H1 (cell line): ENCODE measurements at regions of chr12 and their contacts with region 1.

Region 1: GRCh38 chr12:26629864-26630263 is 203.1 kb downstream of the ITPR2 start:
- DNase-seq: no peak
- H3K4me3 ChIP-seq: no peak overlapping the region
- H3K27ac ChIP-seq: no peak overlapping the region
- H3K4me1 ChIP-seq: peaks cover 0 to 5% (median 3%) of the 10 kb centered on the region in 4 experiments; a peak in 5 of 7 replicates
- H3K27me3 ChIP-seq: no peaks in the 10 kb centered on the region
- CTCF ChIP-seq: peak; percentile 33 to 39 (median 35); a peak in 3 of 4 replicates
- EP300 ChIP-seq: no peak
- POLR2A ChIP-seq: no peak
- RAD21 ChIP-seq: peak; percentile 54 to 67

Region 2: DNA sequence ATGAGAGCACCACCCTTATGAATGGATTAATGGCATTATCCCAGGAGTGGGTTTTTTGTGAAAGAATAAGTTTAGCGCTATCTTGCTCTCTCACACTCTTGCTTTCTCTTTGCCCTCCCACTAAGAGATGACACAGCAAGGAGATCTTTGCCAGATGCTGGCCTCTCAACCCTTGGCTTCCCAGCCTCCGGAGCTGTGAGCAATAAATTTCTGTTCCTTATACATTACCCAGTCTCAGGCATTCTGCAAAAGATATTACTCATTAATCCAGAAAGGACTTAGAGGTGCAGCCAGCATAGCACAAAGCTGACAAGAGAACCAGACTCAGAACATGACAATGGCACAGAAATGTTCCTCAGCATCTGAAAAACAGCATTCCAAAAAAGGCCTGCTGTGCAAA is 12.5 kb after region 1 on chr12:
- CTCF ChIA-PET with region 1: interaction called, 15 read pairs
- POLR2A ChIA-PET with region 1: no interaction called
- DNase-seq: no peak
- H3K4me3 ChIP-seq: no peak overlapping the region
- H3K27ac ChIP-seq: no peak overlapping the region
- H3K4me1 ChIP-seq: peaks cover 3 to 9% (median 4%) of the 10 kb centered on the region in 4 experiments
- H3K27me3 ChIP-seq: no peaks in the 10 kb centered on the region
- CTCF ChIP-seq: no peak
- EP300 ChIP-seq: no peak
- POLR2A ChIP-seq: no peak
- RAD21 ChIP-seq: no peak

Region 3: DNA sequence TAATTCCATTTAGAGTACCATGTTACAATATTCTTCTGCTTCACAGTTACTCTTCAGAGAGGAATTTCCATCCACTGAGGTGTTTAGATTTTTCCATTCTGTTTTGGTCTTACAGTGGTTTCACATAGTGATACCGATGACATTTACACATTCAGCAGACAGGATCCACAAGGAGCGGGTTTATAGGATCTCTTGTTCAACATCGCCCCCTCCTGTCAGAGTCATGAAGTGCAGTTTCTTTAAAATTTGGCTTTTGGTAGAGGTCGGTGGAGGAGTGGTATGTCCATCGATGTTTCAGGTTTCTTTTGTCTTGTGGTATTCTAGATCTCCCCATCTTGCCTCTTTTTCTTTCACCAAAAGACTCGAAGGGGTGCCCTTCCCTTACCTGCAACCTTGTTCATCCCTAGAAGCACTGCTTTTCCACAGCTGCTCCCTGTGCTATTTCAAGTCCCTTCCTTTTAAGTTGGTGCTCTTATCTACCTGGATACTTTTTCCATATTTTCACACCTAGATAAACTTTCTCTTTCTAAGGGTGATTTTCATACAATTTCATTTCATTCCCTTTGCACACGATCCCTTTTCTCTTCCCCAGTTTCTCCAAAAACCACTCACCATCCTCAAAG is 21.8 kb after region 1 on chr12:
- CTCF ChIA-PET with region 1: interaction called, 10 read pairs
- POLR2A ChIA-PET with region 1: no interaction called
- DNase-seq: peak; percentile 59 to 93
- H3K4me3 ChIP-seq: no peak overlapping the region
- H3K27ac ChIP-seq: no peak overlapping the region
- H3K4me1 ChIP-seq: peaks cover 0 to 1% (median 0%) of the 10 kb centered on the region in 4 experiments; a peak in 1 of 7 replicates
- H3K27me3 ChIP-seq: no peaks in the 10 kb centered on the region
- CTCF ChIP-seq: peak; percentile 14 to 85 (median 83)
- EP300 ChIP-seq: no peak
- POLR2A ChIP-seq: no peak
- RAD21 ChIP-seq: peak; percentile 92 to 95

Region 4: GRCh38 chr12:26732005-26732908 is 102.4 kb after region 1 on chr12:
- CTCF ChIA-PET with region 1: no interaction called
- POLR2A ChIA-PET with region 1: no interaction called
- DNase-seq: no peak
- H3K4me3 ChIP-seq: no peak overlapping the region
- H3K27ac ChIP-seq: no peak overlapping the region
- H3K4me1 ChIP-seq: peaks cover 0 to 4% (median 0%) of the 10 kb centered on the region in 4 experiments; a peak in 1 of 7 replicates
- H3K27me3 ChIP-seq: no peaks in the 10 kb centered on the region
- CTCF ChIP-seq: no peak
- EP300 ChIP-seq: no peak
- POLR2A ChIP-seq: no peak
- RAD21 ChIP-seq: no peak